K562 (cell line): ENCODE measurements at regions of chr17 and their contacts with region 1.

Region 1: DNA sequence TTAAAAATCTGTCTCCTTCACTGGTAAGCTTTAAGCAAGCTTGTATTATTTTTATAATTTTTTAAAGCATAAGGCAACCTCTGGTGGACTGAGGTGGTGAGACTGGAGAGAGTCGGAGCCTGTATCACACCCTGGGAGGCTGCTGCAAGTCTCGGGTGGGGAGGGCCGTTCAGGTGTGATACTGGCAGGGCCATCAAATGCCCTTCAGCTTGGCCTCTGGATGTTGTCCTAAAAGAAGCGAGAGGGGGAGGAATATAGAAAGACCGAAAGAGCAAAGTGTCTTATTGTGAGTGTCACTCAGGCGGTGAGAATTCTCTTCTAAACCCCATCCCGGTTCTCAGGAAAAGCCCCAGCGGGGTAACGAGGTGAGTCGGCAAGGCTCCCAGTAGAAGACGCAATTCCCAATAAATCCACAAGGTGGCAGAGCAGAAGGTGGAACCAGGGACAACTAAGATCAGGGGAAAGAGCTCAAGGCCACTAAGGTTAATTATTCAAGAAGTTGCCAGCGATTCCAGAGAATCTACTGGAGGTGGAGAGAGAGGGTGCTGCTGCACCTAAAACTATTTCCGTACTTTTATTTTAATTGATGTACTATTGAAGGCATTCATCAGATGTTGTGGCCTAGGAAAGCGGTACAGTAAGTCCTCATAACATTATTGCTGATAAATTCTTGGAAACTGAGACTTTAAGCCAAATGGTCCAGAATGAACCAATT is 14.1 kb downstream of the C17orf67 start:
- DNase-seq: peak; percentile 78 to 84 (median 80)
- ATAC-seq: peak; percentile 95
- H3K4me3 ChIP-seq: no peak overlapping the region
- H3K27ac ChIP-seq: no peak overlapping the region
- H3K4me1 ChIP-seq: no peaks in the 10 kb centered on the region; a peak in 1 of 5 replicates
- H3K27me3 ChIP-seq: peaks cover 3 to 4% of the 10 kb centered on the region in 2 experiments
- CTCF ChIP-seq: peak; percentile 74 to 81 (median 81)
- EP300 ChIP-seq: no peak
- POLR2A ChIP-seq: no peak
- RAD21 ChIP-seq: peak; percentile 74 to 83

Region 2: GRCh38 chr17:56779898-56780733 is 39.5 kb before region 1 on chr17:
- CTCF ChIA-PET with region 1: no interaction called
- POLR2A ChIA-PET with region 1: no interaction called
- in situ Hi-C with region 1: no loop called
- intact Hi-C with region 1: no loop called
- DNase-seq: peak; percentile 81 to 90 (median 86)
- ATAC-seq: peak; percentile 100
- H3K4me3 ChIP-seq: no peak overlapping the region
- H3K27ac ChIP-seq: no peak overlapping the region
- H3K4me1 ChIP-seq: peaks cover 0 to 9% of the 10 kb centered on the region in 2 experiments; a peak in 3 of 5 replicates
- H3K27me3 ChIP-seq: peaks cover 29 to 36% of the 10 kb centered on the region in 2 experiments
- CTCF ChIP-seq: peak; percentile 95 to 96 (median 95)
- EP300 ChIP-seq: no peak
- POLR2A ChIP-seq: no peak
- RAD21 ChIP-seq: peak; percentile 86 to 92

Region 3: DNA sequence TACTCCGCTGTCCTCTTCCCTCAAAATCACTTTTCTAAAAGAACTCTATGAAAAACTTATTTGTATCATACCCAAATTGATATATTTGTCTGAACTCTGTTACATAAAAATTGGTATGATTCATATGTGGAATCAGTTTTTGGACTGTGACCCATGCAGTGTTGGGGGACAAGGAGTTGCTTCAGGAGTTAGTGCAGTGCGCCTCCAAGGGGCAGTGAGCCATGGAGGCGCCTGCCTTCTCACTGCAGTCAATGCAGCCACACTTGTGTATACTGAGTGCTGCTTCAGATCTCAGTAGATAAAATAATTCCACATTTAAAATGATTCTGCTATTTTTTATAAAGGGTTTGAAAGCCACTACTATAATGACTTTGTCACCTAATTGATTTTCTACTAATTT is 46.9 kb after region 1 on chr17:
- CTCF ChIA-PET with region 1: interaction called, 3 read pairs
- POLR2A ChIA-PET with region 1: no interaction called
- in situ Hi-C with region 1: no loop called
- intact Hi-C with region 1: loop called (anchors 1 kb)
- DNase-seq: peak in 1 of 4 experiments; percentile 9
- ATAC-seq: peak; percentile 82
- H3K4me3 ChIP-seq: no peak overlapping the region
- H3K27ac ChIP-seq: no peak overlapping the region
- H3K4me1 ChIP-seq: no peaks in the 10 kb centered on the region
- H3K27me3 ChIP-seq: no peaks in the 10 kb centered on the region
- CTCF ChIP-seq: peak in 2 of 3 experiments; percentile 30 to 52; a peak in 4 of 6 replicates
- EP300 ChIP-seq: no peak
- POLR2A ChIP-seq: no peak
- RAD21 ChIP-seq: peak in 1 of 2 experiments; percentile 23; a peak in 1 of 4 replicates

Region 4: DNA sequence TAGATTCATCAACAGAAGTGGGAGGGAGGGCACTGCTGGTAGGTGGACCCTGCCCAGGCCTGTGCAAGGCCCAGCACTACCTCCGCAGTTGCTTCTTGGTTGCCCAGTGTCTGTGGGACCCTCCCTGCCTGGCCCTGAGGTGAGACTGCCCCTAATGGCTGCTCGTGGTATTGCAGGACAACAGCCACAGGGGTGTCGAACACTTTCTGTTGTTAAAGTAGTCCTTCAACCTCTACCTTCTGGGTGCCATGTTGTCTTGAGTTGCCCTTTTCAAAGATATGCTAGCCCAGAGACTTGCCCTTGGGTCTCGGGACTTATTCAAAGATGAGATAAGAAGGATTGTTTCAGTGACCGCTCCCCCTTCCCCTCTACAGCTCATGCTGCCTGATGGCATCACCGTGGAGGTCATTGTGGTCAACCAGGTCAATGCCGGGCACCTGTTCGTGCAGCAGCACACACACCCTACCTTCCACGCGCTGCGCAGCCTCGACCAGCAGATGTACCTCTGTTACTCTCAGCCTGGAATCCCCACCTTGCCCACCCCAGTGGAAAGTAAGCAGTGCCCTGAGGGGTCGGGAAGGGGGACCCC is 294.6 kb after region 1 on chr17:
- CTCF ChIA-PET with region 1: no interaction called
- POLR2A ChIA-PET with region 1: no interaction called
- in situ Hi-C with region 1: no loop called
- intact Hi-C with region 1: loop called (anchors 10 kb)
- DNase-seq: peak; percentile 73 to 78 (median 76)
- ATAC-seq: peak; percentile 90
- H3K4me3 ChIP-seq: no peak overlapping the region
- H3K27ac ChIP-seq: no peak overlapping the region; the same call in 2 of the 3 replicates
- H3K4me1 ChIP-seq: peaks cover 7 to 20% of the 10 kb centered on the region in 2 experiments
- H3K27me3 ChIP-seq: no peaks in the 10 kb centered on the region
- CTCF ChIP-seq: peak; percentile 84 to 96 (median 86)
- EP300 ChIP-seq: no peak
- POLR2A ChIP-seq: no peak
- RAD21 ChIP-seq: peak; percentile 43 to 76; a peak in 2 of 4 replicates